HepG2 (cell line): ENCODE measurements at regions of chr2 and their contacts with region 1.

Region 1: GRCh38 chr2:207746131-207746530 is 23.6 kb downstream of the FZD5 start:
- DNase-seq: peak; percentile 85
- ATAC-seq: peak; percentile 79
- H3K4me3 ChIP-seq: no peak overlapping the region
- H3K27ac ChIP-seq: peak overlapping the region; percentile 2
- H3K4me1 ChIP-seq: peaks cover 64% of the 10 kb centered on the region
- H3K27me3 ChIP-seq: no peaks in the 10 kb centered on the region
- CTCF ChIP-seq: peak; percentile 97
- EP300 ChIP-seq: peak in 1 of 2 experiments; percentile 36; a peak in 1 of 4 replicates
- POLR2A ChIP-seq: no peak
- RAD21 ChIP-seq: peak; percentile 99

Region 2: GRCh38 chr2:207625018-207625907 is 120.9 kb before region 1 on chr2 and contains the start of gene METTL21A:
- CTCF ChIA-PET with region 1: interaction called, 5 read pairs
- POLR2A ChIA-PET with region 1: interaction called, 10 read pairs
- in situ Hi-C with region 1: no loop called
- intact Hi-C with region 1: no loop called
- DNase-seq: peak; percentile 94
- ATAC-seq: peak; percentile 80
- H3K4me3 ChIP-seq: peak within 1 kb of the TSS; percentile 80 to 92 (median 89)
- H3K27ac ChIP-seq: peak within 1 kb of the TSS; percentile 87
- H3K4me1 ChIP-seq: peaks cover 66% of the 10 kb centered on the region
- H3K27me3 ChIP-seq: no peaks in the 10 kb centered on the region; a peak in 1 of 5 replicates
- CTCF ChIP-seq: peak; percentile 92
- EP300 ChIP-seq: peak in 1 of 2 experiments; percentile 68; a peak in 3 of 4 replicates
- POLR2A ChIP-seq: peak; percentile 83 to 88
- RAD21 ChIP-seq: peak; percentile 69
- total RNA-seq, gene METTL21A: 61.2 and 65.1 TPM in 2 replicates

Region 3: DNA sequence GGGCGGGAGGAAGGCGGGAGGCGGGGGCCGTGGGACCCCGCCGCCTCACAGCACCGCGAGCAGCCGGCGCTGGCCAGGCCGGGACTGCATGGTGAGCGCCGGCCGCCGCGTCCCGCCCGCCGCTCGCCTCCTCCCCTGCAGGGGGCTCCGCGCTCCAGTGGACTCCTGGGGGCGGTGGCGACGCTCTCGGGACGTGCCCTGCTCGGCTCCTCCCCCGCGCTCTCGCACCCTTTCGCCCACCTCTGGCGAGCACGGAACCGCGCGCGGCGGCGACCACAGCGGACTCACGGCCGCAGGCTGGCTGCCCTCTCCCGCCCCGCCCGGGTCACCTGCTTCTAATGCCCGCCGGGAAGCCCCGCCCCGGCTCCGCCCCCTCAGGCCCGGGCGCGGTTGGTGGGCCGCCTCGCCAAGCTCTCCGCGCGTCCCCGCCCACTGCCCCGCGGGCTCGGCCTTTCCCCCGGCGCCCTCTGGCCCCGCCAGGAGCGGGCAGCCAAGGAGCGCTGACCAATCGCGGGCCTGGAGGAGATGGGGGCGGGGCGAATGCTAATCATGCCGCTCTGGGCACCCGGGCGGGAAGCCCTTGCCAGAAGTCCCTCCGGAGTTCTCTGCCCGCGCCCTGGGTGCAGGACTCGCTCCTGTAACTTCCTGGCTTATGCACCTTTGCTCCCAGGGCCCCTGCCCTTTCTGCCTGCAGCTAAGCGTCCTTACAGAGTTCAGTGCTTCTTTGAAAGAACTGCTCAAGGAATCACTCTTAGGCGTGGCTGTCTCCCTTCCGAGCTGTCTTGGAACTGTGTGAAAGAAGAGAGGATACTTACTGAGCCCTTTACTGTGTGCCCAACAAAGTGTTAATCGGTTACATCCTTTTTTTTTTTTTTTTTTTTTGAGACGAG is 23.7 kb after region 1 on chr2 and contains the start of gene FZD5:
- CTCF ChIA-PET with region 1: interaction called, 7 read pairs
- POLR2A ChIA-PET with region 1: interaction called, 160 read pairs
- in situ Hi-C with region 1: no loop called
- intact Hi-C with region 1: loop called (anchors 1 kb)
- DNase-seq: peak; percentile 98
- ATAC-seq: peak; percentile 87
- H3K4me3 ChIP-seq: peak within 1 kb of the TSS; percentile 80 to 98 (median 88)
- H3K27ac ChIP-seq: peak within 1 kb of the TSS; percentile 92
- H3K4me1 ChIP-seq: peaks cover 55% of the 10 kb centered on the region
- H3K27me3 ChIP-seq: no peaks in the 10 kb centered on the region; a peak in 1 of 5 replicates
- CTCF ChIP-seq: peak; percentile 87
- EP300 ChIP-seq: peak in 1 of 2 experiments; percentile 44; a peak in 2 of 4 replicates
- POLR2A ChIP-seq: peak in 1 of 2 experiments; percentile 91; a peak in 2 of 4 replicates
- RAD21 ChIP-seq: peak; percentile 100
- total RNA-seq, gene FZD5: 28.9 and 34.3 TPM in 2 replicates

Region 4: GRCh38 chr2:207847807-207848544 is 101.8 kb after region 1 on chr2:
- CTCF ChIA-PET with region 1: no interaction called
- POLR2A ChIA-PET with region 1: interaction called, 70 read pairs
- in situ Hi-C with region 1: no loop called
- intact Hi-C with region 1: no loop called
- DNase-seq: peak; percentile 99
- ATAC-seq: peak; percentile 83
- H3K4me3 ChIP-seq: peak overlapping the region; percentile 13 to 27 (median 25); a peak in 3 of 6 replicates
- H3K27ac ChIP-seq: peak overlapping the region; percentile 97
- H3K4me1 ChIP-seq: peaks cover 81% of the 10 kb centered on the region
- H3K27me3 ChIP-seq: no peaks in the 10 kb centered on the region
- CTCF ChIP-seq: peak; percentile 52
- EP300 ChIP-seq: peak; percentile 75 to 97
- POLR2A ChIP-seq: peak in 1 of 2 experiments; percentile 47; a peak in 1 of 4 replicates
- RAD21 ChIP-seq: peak; percentile 22; the same call in 1 of the 2 replicates

Region 5: DNA sequence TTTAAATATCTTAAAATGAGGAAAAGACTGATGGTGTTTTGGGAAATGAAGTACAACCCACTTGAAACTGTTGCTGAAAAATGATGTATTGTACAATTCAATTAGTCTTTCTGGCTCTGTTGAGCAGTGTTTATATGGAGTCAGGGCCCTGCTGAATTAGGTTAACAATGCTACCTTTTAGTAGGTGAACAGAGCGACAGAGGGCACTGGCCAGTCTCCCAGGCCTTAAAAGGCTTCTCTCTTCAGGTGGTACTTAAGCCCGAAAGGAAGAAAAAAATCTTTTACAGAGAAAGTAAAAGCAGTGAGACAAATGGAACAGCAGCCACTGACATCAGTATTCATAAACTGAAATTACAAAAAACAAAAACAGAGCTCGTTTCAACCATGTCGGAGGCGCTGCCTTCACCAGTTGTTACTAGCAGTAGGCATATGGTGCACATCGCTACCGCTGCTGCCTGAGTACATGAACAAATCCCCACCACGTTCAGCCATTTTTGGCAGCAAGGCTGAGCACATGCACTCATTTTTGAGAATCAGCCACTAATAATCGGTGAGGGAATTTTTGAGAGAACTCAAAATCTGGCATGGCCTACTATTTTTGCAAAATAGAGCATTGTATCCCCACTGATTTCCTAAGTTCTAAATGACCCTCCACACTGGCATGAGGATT is 187.4 kb after region 1 on chr2:
- CTCF ChIA-PET with region 1: no interaction called
- POLR2A ChIA-PET with region 1: interaction called, 18 read pairs
- in situ Hi-C with region 1: no loop called
- intact Hi-C with region 1: no loop called
- DNase-seq: no peak
- ATAC-seq: no peak
- H3K4me3 ChIP-seq: no peak overlapping the region
- H3K27ac ChIP-seq: peak overlapping the region; percentile 9
- H3K4me1 ChIP-seq: peaks cover 63% of the 10 kb centered on the region
- H3K27me3 ChIP-seq: no peaks in the 10 kb centered on the region
- CTCF ChIP-seq: no peak
- EP300 ChIP-seq: no peak
- POLR2A ChIP-seq: no peak
- RAD21 ChIP-seq: no peak

Region 6: DNA sequence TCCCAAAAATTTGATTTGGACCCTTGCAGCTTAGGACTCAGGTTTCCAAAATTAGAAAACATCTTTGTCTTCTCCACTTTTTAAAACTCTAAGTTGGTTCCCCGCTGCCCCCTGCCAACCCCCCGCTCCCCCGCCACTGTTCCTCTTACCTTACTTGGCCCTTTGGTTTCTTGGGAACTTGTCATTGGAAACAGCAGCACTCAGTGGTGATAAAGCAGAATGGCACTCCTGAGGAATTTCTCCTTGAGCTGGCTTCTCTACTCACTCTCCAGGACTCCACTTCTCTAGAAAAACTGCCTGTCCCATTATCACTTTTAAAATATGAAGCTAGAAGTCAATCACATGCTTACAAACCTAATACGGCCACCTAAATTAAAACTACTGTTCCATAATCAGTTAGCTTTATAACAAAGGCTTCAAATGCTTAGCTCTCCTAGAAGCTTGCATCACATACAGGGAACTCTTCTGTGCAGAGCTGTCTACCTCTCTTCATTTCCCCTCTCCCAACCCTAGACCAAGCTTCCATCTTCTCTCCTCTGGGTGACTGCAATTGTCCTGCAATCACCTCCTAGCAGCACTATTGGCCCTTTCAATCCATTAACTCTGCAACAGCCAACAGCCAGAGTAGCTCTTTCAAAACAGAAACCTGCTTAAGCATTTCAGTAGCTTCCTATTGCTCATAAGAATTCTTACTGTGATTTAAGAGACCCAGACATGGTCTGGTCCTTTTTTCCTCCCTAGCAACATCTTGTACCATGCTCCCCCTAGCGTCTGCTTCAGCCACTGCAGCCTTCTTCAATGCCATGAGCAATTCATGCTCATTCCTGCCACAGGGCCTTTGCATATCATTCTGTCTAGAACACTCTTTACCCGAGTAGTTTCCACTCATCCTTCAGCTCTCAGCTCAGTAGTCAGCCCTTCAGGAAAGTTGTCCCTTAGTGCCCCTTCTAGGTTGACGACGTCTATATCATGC is 294.4 kb after region 1 on chr2:
- CTCF ChIA-PET with region 1: interaction called, 32 read pairs
- POLR2A ChIA-PET with region 1: interaction called, 16 read pairs
- in situ Hi-C with region 1: loop called (anchors 5 kb)
- intact Hi-C with region 1: loop called (anchors 1 kb)
- DNase-seq: peak; percentile 65
- ATAC-seq: peak; percentile 84
- H3K4me3 ChIP-seq: no peak overlapping the region
- H3K27ac ChIP-seq: no peak overlapping the region
- H3K4me1 ChIP-seq: peaks cover 47% of the 10 kb centered on the region
- H3K27me3 ChIP-seq: peaks cover 0 to 8% of the 10 kb centered on the region in 2 experiments; a peak in 1 of 5 replicates
- CTCF ChIP-seq: peak; percentile 90
- EP300 ChIP-seq: no peak
- POLR2A ChIP-seq: no peak
- RAD21 ChIP-seq: peak; percentile 58